IMR-90 (cell line): ENCODE measurements at regions of chr18 and their contacts with region 1.

Region 1: GRCh38 chr18:35407871-35408481 is 30.8 kb upstream of the ZNF396 start:
- DNase-seq: peak; percentile 69
- ATAC-seq: peak; percentile 90
- H3K4me3 ChIP-seq: no peak overlapping the region
- H3K27ac ChIP-seq: no peak overlapping the region
- H3K4me1 ChIP-seq: no peaks in the 10 kb centered on the region
- H3K27me3 ChIP-seq: peaks cover 13% of the 10 kb centered on the region
- CTCF ChIP-seq: peak; percentile 85
- POLR2A ChIP-seq: no peak
- RAD21 ChIP-seq: peak; percentile 89

Region 2: GRCh38 chr18:35231052-35231451 is 176.9 kb before region 1 on chr18:
- CTCF ChIA-PET with region 1: no interaction called
- POLR2A ChIA-PET with region 1: no interaction called
- dilution Hi-C with region 1: no loop called
- in situ Hi-C with region 1: no loop called
- intact Hi-C with region 1: loop called (anchors 2 kb)
- DNase-seq: peak; percentile 63
- ATAC-seq: peak; percentile 96
- H3K4me3 ChIP-seq: no peak overlapping the region
- H3K27ac ChIP-seq: no peak overlapping the region
- H3K4me1 ChIP-seq: peaks cover 2% of the 10 kb centered on the region; the same call in 1 of the 2 replicates
- H3K27me3 ChIP-seq: no peaks in the 10 kb centered on the region
- CTCF ChIP-seq: peak; percentile 92
- POLR2A ChIP-seq: no peak
- RAD21 ChIP-seq: peak; percentile 94

Region 3: GRCh38 chr18:35497370-35498197 is 89.6 kb after region 1 on chr18 and contains the start of gene INO80C:
- CTCF ChIA-PET with region 1: no interaction called
- POLR2A ChIA-PET with region 1: interaction called, 3 read pairs
- dilution Hi-C with region 1: no loop called
- in situ Hi-C with region 1: no loop called
- intact Hi-C with region 1: loop called (anchors 5 kb)
- DNase-seq: peak; percentile 93
- ATAC-seq: peak; percentile 96
- H3K4me3 ChIP-seq: peak within 1 kb of the TSS; percentile 74
- H3K27ac ChIP-seq: peak within 1 kb of the TSS; percentile 93
- H3K4me1 ChIP-seq: peaks cover 3% of the 10 kb centered on the region
- H3K27me3 ChIP-seq: no peaks in the 10 kb centered on the region
- CTCF ChIP-seq: no peak
- POLR2A ChIP-seq: peak; percentile 89
- RAD21 ChIP-seq: peak; percentile 2; the same call in 1 of the 2 replicates
- total RNA-seq, gene INO80C: 4.4 and 5.6 TPM in 2 replicates

Region 4: GRCh38 chr18:35580701-35581539 is 172.9 kb after region 1 on chr18:
- CTCF ChIA-PET with region 1: no interaction called
- POLR2A ChIA-PET with region 1: no interaction called
- dilution Hi-C with region 1: no loop called
- in situ Hi-C with region 1: no loop called
- intact Hi-C with region 1: loop called (anchors 2 kb)
- DNase-seq: peak; percentile 41
- ATAC-seq: peak; percentile 75
- H3K4me3 ChIP-seq: peak overlapping the region; percentile 50
- H3K27ac ChIP-seq: peak overlapping the region; percentile 49
- H3K4me1 ChIP-seq: peaks cover 5% of the 10 kb centered on the region
- H3K27me3 ChIP-seq: no peaks in the 10 kb centered on the region
- CTCF ChIP-seq: no peak
- POLR2A ChIP-seq: no peak
- RAD21 ChIP-seq: peak; percentile 6; the same call in 1 of the 2 replicates

Region 5: DNA sequence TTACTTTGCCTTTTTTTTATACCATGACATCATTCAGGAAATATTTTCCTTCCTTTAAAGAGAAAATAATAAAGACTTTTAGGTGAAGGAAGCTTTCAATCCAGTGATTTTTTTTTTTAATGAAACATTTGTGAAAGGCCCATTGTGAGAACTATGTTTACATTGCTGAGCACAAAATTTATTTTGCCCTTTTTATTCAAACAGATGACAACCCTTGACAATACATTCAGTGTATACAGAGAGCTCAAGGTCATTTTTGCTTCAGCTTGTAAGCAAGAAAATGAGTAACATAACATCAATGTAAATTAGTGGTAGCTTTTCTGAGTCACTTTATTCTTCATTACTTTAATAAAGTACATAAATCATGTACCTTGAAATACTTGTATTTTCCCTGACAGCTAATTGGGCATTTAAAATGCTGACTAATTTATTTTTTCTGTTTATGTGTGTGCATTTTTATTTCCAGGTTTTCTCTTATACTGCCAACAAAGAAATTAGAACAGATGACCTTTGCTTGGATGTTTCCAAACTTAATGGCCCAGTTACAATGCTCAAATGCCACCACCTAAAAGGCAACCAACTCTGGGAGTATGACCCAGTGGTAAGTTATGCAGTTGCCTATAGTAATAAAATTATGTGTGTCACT is 295.2 kb after region 1 on chr18:
- CTCF ChIA-PET with region 1: no interaction called
- POLR2A ChIA-PET with region 1: no interaction called
- dilution Hi-C with region 1: no loop called
- in situ Hi-C with region 1: no loop called
- intact Hi-C with region 1: loop called (anchors 5 kb)
- DNase-seq: peak; percentile 48
- ATAC-seq: peak; percentile 63
- H3K4me3 ChIP-seq: no peak overlapping the region
- H3K27ac ChIP-seq: no peak overlapping the region
- H3K4me1 ChIP-seq: peaks cover 6% of the 10 kb centered on the region
- H3K27me3 ChIP-seq: no peaks in the 10 kb centered on the region
- CTCF ChIP-seq: no peak
- POLR2A ChIP-seq: no peak
- RAD21 ChIP-seq: no peak

Region 6: GRCh38 chr18:35756506-35757117 is 348.6 kb after region 1 on chr18:
- CTCF ChIA-PET with region 1: interaction called, 4 read pairs
- POLR2A ChIA-PET with region 1: no interaction called
- dilution Hi-C with region 1: no loop called
- in situ Hi-C with region 1: no loop called
- intact Hi-C with region 1: loop called (anchors 5 kb)
- DNase-seq: peak; percentile 59
- ATAC-seq: peak; percentile 84
- H3K4me3 ChIP-seq: no peak overlapping the region
- H3K27ac ChIP-seq: no peak overlapping the region
- H3K4me1 ChIP-seq: no peaks in the 10 kb centered on the region
- H3K27me3 ChIP-seq: peaks cover 32% of the 10 kb centered on the region
- CTCF ChIP-seq: peak; percentile 85
- POLR2A ChIP-seq: peak; percentile 35; the same call in 1 of the 2 replicates
- RAD21 ChIP-seq: peak; percentile 87

Region 7: GRCh38 chr18:35949903-35950627 is 542.1 kb after region 1 on chr18:
- CTCF ChIA-PET with region 1: no interaction called
- POLR2A ChIA-PET with region 1: no interaction called
- dilution Hi-C with region 1: no loop called
- in situ Hi-C with region 1: no loop called
- intact Hi-C with region 1: loop called (anchors 1 kb)
- DNase-seq: peak; percentile 59
- ATAC-seq: peak; percentile 97
- H3K4me3 ChIP-seq: peak overlapping the region; percentile 58
- H3K27ac ChIP-seq: no peak overlapping the region
- H3K4me1 ChIP-seq: peaks cover 1% of the 10 kb centered on the region; the same call in 1 of the 2 replicates
- H3K27me3 ChIP-seq: peaks cover 13% of the 10 kb centered on the region
- CTCF ChIP-seq: peak; percentile 72
- POLR2A ChIP-seq: no peak
- RAD21 ChIP-seq: peak; percentile 58